Activated CD4-positive, alpha-beta memory T cell treated with anti-CD3 and anti-CD28 coated beads, Interleukin-2, amount 10 ng/mL, durations not matched to agents 7 days and 5 days (primary cell): ENCODE measurements at regions of chr7 and their contacts with region 1.

Region 1: DNA sequence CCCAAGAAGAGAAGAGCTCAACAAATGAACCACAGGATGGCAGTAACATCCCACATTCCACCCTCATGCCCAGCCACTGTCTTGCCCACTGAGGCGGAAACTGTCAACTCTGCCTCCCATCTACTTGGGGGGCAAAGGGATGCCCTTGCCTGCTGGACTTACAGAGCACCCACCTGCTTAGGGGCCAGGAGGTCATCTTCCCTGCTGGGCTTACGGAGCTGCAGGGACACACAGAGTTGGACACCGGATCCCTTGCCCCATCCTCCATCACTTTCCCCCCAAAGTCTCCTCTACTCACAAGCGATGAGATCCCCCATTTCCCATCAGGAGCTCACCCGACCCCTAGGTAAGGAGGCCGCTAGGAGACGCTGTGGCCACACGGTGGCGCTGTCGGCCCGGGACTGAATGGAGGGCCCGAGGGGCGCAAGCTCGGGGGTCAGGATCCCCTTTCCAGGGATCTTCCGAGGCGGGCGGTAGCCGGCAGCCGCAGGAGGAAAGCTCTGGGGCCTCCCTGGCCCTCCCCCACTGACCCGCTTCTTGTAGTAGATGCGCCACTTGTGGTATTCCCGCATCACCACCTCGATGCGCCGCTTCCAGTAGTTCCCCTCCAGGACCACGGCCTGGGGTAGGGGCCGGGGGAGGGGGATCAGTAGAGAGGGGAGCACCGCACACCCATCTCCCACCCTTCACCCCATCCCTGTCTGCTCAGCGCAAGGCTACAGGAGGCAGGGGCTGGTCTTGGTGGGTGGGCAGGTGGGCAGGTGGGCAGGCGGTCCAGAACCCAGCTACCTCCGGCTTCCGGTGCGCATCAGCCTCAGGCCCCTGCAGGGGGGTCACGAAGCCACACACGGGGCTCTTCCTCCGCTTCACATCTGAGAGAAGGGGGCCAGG is 17.3 kb downstream of the MLXIPL start:
- DNase-seq: peak; percentile 66
- H3K4me3 Mint-ChIP-seq: no peak overlapping the region
- H3K27ac Mint-ChIP-seq: no peak overlapping the region
- H3K4me1 Mint-ChIP-seq: no peaks in the 10 kb centered on the region
- H3K27me3 Mint-ChIP-seq: peaks cover 14% of the 10 kb centered on the region

Region 2: DNA sequence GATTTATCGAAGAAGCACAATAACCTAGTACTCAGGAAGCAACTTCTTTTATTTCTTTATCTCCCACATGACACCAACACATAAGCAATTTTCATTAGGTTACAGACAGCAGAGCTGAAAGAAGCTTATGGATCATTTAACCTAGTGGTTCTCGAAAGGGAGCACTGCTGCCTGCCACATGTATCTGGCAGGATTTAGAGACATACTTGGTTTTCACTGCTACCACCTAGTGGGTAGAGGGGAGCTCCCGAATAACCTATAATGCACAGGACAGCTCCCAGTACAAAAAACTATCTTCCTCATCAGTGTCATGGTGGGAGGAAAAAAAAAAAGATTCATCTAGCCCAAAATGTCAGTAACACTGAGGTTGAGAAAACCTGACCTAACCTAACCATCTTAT is 138.9 kb before region 1 on chr7:
- CTCF ChIA-PET with region 1: no interaction called
- POLR2A ChIA-PET with region 1: no interaction called
- DNase-seq: no peak
- H3K4me3 Mint-ChIP-seq: no peak overlapping the region
- H3K27ac Mint-ChIP-seq: no peak overlapping the region
- H3K4me1 Mint-ChIP-seq: no peaks in the 10 kb centered on the region
- H3K27me3 Mint-ChIP-seq: no peaks in the 10 kb centered on the region

Region 3: GRCh38 chr7:73718905-73719805 is 112.1 kb after region 1 on chr7 and contains the start of gene STX1A:
- CTCF ChIA-PET with region 1: interaction called, 54 read pairs
- POLR2A ChIA-PET with region 1: interaction called, 4 read pairs
- DNase-seq: peak; percentile 80
- H3K4me3 Mint-ChIP-seq: peak within 1 kb of the TSS; percentile 75
- H3K27ac Mint-ChIP-seq: peak within 1 kb of the TSS; percentile 70
- H3K4me1 Mint-ChIP-seq: peaks cover 33% of the 10 kb centered on the region
- H3K27me3 Mint-ChIP-seq: peaks cover 17% of the 10 kb centered on the region
- total RNA-seq, gene STX1A: 27.9 to 30.7 TPM

Region 4: DNA sequence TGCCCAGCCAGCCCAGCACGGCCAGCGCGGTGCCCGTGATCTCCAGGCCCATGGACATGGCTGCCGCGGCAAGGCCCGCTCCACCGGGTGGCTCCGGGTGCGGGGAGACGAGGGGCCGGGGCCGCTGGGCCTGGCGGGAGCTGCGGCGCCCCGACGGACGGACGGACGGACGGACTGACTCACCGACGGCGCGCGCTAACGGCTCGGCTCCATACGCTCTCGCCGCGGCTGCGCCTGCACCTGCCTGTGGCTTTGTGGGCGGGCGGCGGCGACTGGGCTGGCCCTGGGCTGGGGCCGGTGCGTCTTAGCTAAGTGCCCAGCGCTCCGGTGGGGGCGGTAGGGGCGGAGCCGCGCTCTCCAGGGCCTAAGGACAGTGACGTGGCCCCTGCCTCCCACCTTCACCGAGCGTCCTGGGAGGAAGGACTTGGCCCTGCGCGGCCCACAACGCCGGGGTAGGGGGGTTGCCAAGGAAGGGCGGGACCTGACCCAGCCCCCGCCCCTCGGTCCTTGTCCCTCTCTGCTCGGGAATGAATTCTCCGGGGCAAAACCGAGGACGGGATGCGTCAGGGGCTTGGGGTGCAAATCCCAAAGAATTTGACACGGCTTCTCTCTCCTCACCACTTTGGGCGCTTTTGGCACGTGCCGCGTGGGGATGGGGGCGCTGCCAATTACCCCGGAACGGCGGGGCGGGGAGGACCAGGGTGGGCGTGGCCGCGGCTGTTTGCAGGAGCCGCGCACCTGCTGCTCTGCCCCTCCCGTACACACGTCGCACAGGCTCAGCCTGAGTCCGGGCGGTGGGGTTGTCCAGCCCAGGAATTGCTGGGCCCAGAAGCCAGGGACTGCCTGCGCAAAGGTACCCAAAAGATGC is 163.2 kb after region 1 on chr7 and contains the start of gene CLDN3:
- CTCF ChIA-PET with region 1: no interaction called
- POLR2A ChIA-PET with region 1: no interaction called
- DNase-seq: no peak
- H3K4me3 Mint-ChIP-seq: no peak within 1 kb of the TSS
- H3K27ac Mint-ChIP-seq: no peak within 1 kb of the TSS
- H3K4me1 Mint-ChIP-seq: peaks cover 11% of the 10 kb centered on the region
- H3K27me3 Mint-ChIP-seq: peaks cover 35% of the 10 kb centered on the region
- total RNA-seq, gene CLDN3: not detected